ENCODE measurements at regions of chr17 and their contacts with region 1.

Region 1: DNA sequence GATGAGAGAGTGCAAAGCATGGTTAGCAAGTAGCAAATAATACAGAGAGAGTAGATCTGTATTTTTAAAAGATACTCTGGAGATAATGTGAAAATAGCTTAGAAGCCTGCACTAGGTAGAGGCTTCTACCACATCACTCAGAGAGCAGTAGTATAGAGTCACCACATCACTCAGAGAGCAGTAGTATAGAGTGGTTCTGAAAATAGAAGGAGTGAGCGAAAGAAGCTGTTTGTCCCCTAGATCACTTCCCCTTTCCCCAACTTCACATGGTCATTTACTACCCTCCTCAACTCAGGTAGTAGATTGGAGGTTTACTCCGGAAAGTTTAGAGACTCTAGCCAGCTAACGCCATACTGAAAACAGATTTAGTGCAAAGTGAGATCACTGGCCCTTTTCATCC is 17.1 kb downstream of the DGKE start:
- DNase-seq: no peak
- ATAC-seq: no peak
- H3K4me3 ChIP-seq: no peak overlapping the region
- H3K27ac ChIP-seq: no peak overlapping the region
- H3K4me1 ChIP-seq: no peaks in the 10 kb centered on the region
- H3K27me3 ChIP-seq: no peaks in the 10 kb centered on the region
- CTCF ChIP-seq: no peak
- POLR2A ChIP-seq: no peak

Region 2: DNA sequence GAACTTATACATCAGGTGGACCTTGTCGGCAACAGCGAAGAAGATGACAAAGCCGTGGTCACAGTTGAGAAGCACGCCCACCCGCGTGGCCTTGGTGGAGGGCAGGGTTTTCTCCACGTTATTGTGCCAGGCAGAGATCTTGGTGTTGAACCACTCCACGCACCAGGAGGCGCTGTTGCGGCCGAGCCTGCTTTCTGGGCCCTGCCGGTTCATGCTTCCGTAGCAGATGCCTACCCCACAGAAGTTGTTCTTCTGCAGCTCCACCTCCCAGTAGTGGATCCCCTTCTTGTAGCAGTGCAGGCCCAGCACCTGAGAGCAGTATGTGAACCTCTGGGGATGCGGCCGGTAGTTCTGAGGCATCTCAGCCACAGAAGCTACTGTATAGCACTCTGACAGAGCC is 40.8 kb after region 1 on chr17:
- in situ Hi-C with region 1: no loop called
- intact Hi-C with region 1: loop called (anchors 5 kb)
- DNase-seq: no peak
- ATAC-seq: no peak
- H3K4me3 ChIP-seq: no peak overlapping the region
- H3K27ac ChIP-seq: no peak overlapping the region
- H3K4me1 ChIP-seq: no peaks in the 10 kb centered on the region
- H3K27me3 ChIP-seq: no peaks in the 10 kb centered on the region
- CTCF ChIP-seq: peak in 4 of 5 experiments; percentile 14 to 50 (median 40)
- POLR2A ChIP-seq: no peak